Activated T-helper 2 cell treated with anti-CD3 and anti-CD28 coated beads, Interferon-gamma antibody, Interleukin-2, Interleukin-4, amounts not matched to agents 10 μg/mL and 5 μg/mL and 100 μg/mL, durations not matched to agents 14 hours and 24 hours and 36 hours (primary cell): ENCODE measurements at regions of chr2 and their contacts with region 1.

Region 1: GRCh38 chr2:153519257-153519875 is 40.8 kb upstream of the RPRM start:
- DNase-seq: peak; percentile 12
- H3K4me3 Mint-ChIP-seq: no peak overlapping the region
- H3K27ac Mint-ChIP-seq: no peak overlapping the region
- H3K4me1 Mint-ChIP-seq: no peaks in the 10 kb centered on the region
- H3K27me3 Mint-ChIP-seq: no peaks in the 10 kb centered on the region

Region 2: GRCh38 chr2:152740743-152741328 is 778.5 kb before region 1 on chr2:
- intact Hi-C with region 1: loop called (anchors 2 kb)
- DNase-seq: no peak
- H3K4me3 Mint-ChIP-seq: no peak overlapping the region
- H3K27ac Mint-ChIP-seq: no peak overlapping the region
- H3K4me1 Mint-ChIP-seq: no peaks in the 10 kb centered on the region
- H3K27me3 Mint-ChIP-seq: no peaks in the 10 kb centered on the region

Region 3: GRCh38 chr2:153163058-153163457 is 356.3 kb before region 1 on chr2:
- intact Hi-C with region 1: loop called (anchors 2 kb)
- DNase-seq: no peak
- H3K4me3 Mint-ChIP-seq: no peak overlapping the region
- H3K27ac Mint-ChIP-seq: no peak overlapping the region
- H3K4me1 Mint-ChIP-seq: no peaks in the 10 kb centered on the region
- H3K27me3 Mint-ChIP-seq: no peaks in the 10 kb centered on the region

Region 4: DNA sequence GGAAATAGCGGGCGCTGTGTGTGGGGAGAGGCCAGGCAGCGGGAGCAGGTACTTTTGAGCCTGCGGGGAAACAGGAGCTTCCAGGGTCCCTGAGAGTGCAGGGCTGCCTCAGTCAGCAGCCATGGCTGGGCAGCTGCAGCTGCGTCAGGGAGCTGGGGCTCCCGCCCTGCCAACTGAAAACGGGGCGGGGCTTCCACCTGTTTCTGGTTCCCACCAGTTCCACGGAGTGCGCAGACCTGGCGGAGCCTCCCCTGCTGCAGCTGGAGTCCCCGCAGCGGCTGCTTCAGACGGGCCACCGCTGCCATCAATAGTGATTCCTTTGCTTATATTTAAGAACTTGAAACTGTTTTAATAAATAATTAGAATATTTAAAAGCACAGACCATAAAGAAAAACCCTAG is 10.2 kb before region 1 on chr2:
- intact Hi-C with region 1: no loop called
- DNase-seq: no peak
- H3K4me3 Mint-ChIP-seq: no peak overlapping the region
- H3K27ac Mint-ChIP-seq: no peak overlapping the region
- H3K4me1 Mint-ChIP-seq: no peaks in the 10 kb centered on the region
- H3K27me3 Mint-ChIP-seq: no peaks in the 10 kb centered on the region

Region 5: GRCh38 chr2:153543639-153544071 is 24.3 kb after region 1 on chr2:
- intact Hi-C with region 1: loop called (anchors 2 kb)
- DNase-seq: no peak
- H3K4me3 Mint-ChIP-seq: no peak overlapping the region
- H3K27ac Mint-ChIP-seq: peak overlapping the region; percentile 24
- H3K4me1 Mint-ChIP-seq: peaks cover 7% of the 10 kb centered on the region
- H3K27me3 Mint-ChIP-seq: no peaks in the 10 kb centered on the region